ENCODE measurements at regions of chr14 and their contacts with region 1.

Region 1: DNA sequence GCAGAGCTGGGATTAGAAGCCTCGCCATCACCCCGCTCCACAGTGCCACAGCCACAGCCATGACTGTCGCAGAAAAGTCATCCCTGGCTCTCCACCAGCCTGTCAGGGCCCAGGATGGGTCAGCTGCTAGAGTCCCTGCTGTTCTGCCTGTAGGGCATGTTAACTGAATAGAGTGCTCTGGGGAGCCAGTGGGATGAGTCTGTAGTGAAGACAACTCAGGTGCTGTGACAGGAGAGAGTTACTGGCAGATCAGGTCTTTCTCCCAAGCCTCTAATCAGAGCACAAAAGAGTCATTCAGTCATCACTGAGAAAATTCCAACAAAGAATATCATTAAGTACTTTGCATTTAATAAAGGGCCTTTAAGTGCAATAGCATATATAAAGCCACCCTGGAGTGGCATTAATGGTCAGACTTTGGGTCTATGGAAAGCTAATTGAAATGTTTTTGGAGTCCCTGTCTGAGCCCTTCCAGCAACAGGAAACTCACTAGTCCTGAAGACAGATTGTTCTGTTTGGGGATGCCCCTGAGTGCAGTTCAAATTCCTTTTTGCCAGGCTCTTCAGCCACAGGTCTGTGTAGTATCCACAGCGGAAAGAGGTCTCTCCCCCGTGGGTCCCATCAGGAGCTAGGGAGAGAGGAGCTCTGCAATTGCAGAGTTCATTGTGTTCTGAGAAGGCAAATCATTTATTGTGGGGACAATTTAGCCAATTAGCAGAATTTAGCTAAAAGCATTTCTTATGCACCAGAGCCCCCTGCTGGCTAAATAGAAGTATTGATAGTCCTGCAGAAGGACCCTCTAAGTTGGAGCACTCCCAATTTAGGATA is 45.2 kb upstream of the C14orf132 start:
- DNase-seq: peak; percentile 29
- H3K4me3 Mint-ChIP-seq: no peak overlapping the region
- H3K27ac Mint-ChIP-seq: no peak overlapping the region
- H3K4me1 Mint-ChIP-seq: no peaks in the 10 kb centered on the region
- H3K27me3 Mint-ChIP-seq: peaks cover 85% of the 10 kb centered on the region
- CTCF ChIP-seq: peak; percentile 73

Region 2: DNA sequence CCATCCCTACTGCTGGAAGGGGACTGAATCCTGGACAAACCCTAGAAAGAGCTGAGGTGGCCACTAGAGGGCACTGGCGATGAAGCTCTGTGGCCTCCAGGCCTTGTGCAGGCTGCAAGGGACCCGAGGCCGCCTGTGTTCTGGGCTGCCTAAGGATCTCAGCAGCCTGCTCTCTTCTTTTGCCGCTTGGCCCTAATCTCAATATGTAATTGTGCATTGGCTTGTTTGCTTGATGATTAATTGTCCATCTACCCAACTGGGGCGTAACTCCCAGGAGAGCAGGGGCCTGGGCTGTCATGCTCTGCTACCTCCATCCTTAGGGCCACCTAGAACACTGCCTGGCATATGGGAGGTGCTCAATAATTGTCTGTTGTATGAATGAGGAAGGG is 551.4 kb before region 1 on chr14:
- CTCF ChIA-PET with region 1: no interaction called
- intact Hi-C with region 1: loop called (anchors 2 kb)
- DNase-seq: peak; percentile 86
- H3K4me3 Mint-ChIP-seq: no peak overlapping the region
- H3K27ac Mint-ChIP-seq: no peak overlapping the region
- H3K4me1 Mint-ChIP-seq: no peaks in the 10 kb centered on the region
- H3K27me3 Mint-ChIP-seq: no peaks in the 10 kb centered on the region
- CTCF ChIP-seq: peak; percentile 77

Region 3: DNA sequence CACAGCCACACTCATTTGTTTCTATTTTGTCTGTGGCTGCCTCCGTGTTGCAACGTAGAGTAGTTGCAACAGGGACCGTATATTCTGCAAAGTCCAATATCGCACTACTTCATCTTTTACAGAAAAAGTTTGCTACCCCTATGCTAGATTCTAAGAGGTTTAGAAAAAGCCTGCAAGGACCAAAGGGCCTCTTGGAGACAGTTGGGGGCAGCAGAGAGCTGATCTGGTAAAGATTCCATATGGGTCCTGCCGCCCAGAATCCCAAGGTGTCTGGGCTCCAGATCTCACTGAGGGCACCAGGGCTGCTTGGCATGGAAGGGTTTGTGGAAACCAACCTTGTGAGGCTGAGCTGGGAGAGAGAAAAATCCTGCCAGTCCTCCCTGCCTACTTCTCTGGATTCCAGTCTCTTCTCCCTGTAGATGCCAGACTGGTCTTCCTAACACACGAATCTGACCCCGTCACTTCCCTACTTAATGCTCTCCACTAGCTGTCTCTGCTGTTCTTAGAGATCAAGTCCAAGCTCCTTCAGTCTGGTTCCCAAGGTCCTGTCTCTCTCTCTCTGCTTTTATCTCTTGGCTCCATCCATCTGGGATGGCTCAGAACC is 384.5 kb before region 1 on chr14:
- CTCF ChIA-PET with region 1: interaction called, 3 read pairs
- intact Hi-C with region 1: loop called (anchors 1 kb)
- DNase-seq: peak; percentile 46
- H3K4me3 Mint-ChIP-seq: no peak overlapping the region
- H3K27ac Mint-ChIP-seq: no peak overlapping the region
- H3K4me1 Mint-ChIP-seq: no peaks in the 10 kb centered on the region
- H3K27me3 Mint-ChIP-seq: peaks cover 87% of the 10 kb centered on the region
- CTCF ChIP-seq: peak; percentile 33

Region 4: GRCh38 chr14:95895720-95896119 is 98.3 kb before region 1 on chr14:
- CTCF ChIA-PET with region 1: interaction called, 4 read pairs
- intact Hi-C with region 1: loop called (anchors 2 kb)
- DNase-seq: peak; percentile 53
- H3K4me3 Mint-ChIP-seq: no peak overlapping the region
- H3K27ac Mint-ChIP-seq: no peak overlapping the region
- H3K4me1 Mint-ChIP-seq: no peaks in the 10 kb centered on the region
- H3K27me3 Mint-ChIP-seq: peaks cover 97% of the 10 kb centered on the region
- CTCF ChIP-seq: peak; percentile 47

Region 5: DNA sequence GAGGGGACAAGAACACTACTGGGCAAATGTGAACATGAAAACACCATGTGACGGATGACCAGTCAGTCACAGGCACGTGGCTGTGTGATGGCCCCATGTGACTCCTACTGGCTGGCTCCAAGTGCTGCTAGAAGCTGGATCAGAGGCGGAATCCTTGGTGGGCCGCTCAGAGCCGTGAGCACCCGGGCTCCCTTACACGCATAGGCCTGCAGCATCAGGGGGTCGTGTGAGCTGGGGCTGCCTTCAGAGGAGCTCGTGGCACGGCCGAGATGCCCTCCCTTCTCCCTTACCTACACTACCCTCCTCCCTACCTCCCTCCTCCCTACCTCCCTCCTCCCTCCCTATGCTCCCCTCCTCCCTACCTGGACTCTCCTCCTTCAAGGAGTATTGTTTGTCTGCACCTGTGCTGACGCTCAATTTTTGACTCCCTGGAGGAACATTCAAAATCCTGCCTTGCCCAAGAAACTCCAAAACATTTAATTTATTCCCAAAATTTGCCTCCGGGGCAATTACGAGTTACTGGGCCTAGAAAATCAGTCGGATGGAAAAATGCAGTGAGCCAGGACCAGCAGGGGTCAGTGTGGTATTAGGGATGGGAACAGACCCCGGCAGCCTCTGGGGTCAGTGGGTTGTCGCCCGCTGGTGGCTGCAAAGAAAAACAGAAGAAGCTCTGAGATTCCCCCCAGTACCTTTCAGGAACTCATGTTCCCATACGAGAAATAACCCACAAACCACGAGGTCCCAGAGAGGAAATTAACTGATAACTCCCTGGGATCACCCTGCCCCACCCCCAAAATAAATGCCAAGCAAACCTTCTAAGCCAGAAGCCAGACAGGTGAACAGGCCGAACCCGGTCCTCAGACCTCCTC is 106.4 kb after region 1 on chr14:
- CTCF ChIA-PET with region 1: interaction called, 45 read pairs
- intact Hi-C with region 1: loop called (anchors 1 kb)
- DNase-seq: peak; percentile 88
- H3K4me3 Mint-ChIP-seq: no peak overlapping the region
- H3K27ac Mint-ChIP-seq: no peak overlapping the region
- H3K4me1 Mint-ChIP-seq: peaks cover 6% of the 10 kb centered on the region
- H3K27me3 Mint-ChIP-seq: peaks cover 12% of the 10 kb centered on the region
- CTCF ChIP-seq: peak; percentile 90